Activated CD8-positive, alpha-beta T cell treated with anti-CD3 and anti-CD28 coated beads for 36 hours (primary cell): ENCODE measurements at regions of chr2 and their contacts with region 1.

Region 1: GRCh38 chr2:157336137-157337010 is 10.8 kb upstream of the ERMN start:
- DNase-seq: peak; percentile 69
- ATAC-seq: no peak
- H3K4me3 Mint-ChIP-seq: peak overlapping the region; percentile 42
- H3K27ac Mint-ChIP-seq: peak overlapping the region; percentile 14
- H3K4me1 Mint-ChIP-seq: peaks cover 63% of the 10 kb centered on the region
- H3K27me3 Mint-ChIP-seq: no peaks in the 10 kb centered on the region
- CTCF ChIP-seq: peak; percentile 91

Region 2: DNA sequence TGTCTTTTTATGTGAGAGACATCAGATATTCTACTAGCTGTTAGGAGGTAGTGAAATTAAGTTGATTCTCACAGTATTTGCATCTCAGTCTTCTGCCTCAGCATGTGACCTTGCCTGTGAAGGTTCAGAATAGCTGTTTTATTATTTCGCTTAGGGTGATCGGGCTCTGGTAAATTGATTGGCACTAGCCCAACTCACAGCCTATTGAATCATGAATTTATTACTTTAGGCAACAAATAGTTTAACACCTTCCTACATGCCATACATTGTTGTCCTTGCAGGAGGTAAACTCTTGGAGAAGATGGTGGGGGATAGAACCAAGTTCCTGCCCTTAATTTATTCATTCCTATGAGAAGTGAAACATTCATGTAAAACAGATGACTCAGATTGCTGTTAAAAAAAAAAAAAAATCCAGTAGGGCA is 798.3 kb before region 1 on chr2:
- CTCF ChIA-PET with region 1: no interaction called
- POLR2A ChIA-PET with region 1: no interaction called
- intact Hi-C with region 1: no loop called
- DNase-seq: no peak
- ATAC-seq: peak; percentile 73
- H3K4me3 Mint-ChIP-seq: no peak overlapping the region
- H3K27ac Mint-ChIP-seq: no peak overlapping the region
- H3K4me1 Mint-ChIP-seq: peaks cover 20% of the 10 kb centered on the region
- H3K27me3 Mint-ChIP-seq: no peaks in the 10 kb centered on the region
- CTCF ChIP-seq: no peak

Region 3: DNA sequence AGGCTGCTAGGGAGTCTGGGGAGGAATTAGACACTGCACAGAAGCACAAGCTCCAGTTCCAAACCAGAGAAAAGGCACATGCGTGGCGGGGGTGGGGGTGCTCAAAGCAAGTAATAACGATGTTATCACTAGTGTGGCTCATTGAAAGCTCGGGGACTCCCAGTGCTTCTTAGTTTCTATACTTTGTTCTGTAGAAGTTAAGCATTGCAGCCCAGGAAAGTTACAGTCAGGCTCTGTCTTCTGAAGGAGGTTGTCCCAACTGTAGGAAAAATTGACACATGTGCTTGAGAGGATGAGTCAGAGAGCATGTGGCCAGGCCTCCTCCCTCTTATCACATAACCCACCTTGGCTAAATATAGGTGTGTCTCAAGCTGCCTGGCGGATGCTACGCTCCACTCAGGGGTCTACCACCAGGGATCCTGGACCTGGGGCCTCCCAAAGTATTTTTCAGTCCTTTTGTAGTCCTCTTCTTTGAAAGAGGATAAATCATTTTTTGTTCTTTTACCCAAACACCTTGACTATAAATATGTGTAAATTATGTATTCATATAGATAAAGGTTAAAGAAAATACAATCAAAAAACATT is 75.1 kb before region 1 on chr2:
- CTCF ChIA-PET with region 1: no interaction called
- POLR2A ChIA-PET with region 1: no interaction called
- intact Hi-C with region 1: no loop called
- DNase-seq: peak; percentile 85
- ATAC-seq: peak; percentile 77
- H3K4me3 Mint-ChIP-seq: peak overlapping the region; percentile 39
- H3K27ac Mint-ChIP-seq: peak overlapping the region; percentile 78
- H3K4me1 Mint-ChIP-seq: peaks cover 32% of the 10 kb centered on the region
- H3K27me3 Mint-ChIP-seq: peaks cover 12% of the 10 kb centered on the region
- CTCF ChIP-seq: no peak

Region 4: DNA sequence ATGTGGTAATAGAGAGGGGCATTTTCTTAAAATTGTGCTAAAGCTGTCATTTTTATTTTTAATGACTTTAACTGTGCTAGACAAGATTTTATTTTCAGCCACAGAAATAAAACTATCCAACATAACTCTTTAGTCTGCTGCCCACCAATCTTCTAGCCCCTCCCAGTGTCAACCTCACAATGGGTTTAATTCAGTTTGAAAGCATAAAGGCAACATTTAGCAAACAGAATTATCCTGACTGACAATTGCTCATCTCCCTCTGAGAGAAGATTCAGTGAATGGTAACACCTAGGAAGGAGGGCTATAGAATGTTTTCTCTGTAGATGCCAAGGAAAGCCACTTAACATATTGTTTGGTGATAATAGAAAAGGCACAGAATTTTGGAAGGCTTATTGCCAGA is 16.0 kb before region 1 on chr2:
- CTCF ChIA-PET with region 1: interaction called, 131 read pairs
- POLR2A ChIA-PET with region 1: no interaction called
- intact Hi-C with region 1: no loop called
- DNase-seq: no peak
- ATAC-seq: no peak
- H3K4me3 Mint-ChIP-seq: no peak overlapping the region
- H3K27ac Mint-ChIP-seq: no peak overlapping the region
- H3K4me1 Mint-ChIP-seq: peaks cover 23% of the 10 kb centered on the region
- H3K27me3 Mint-ChIP-seq: no peaks in the 10 kb centered on the region
- CTCF ChIP-seq: no peak

Region 5: GRCh38 chr2:157355618-157356017 is 19.2 kb after region 1 on chr2:
- CTCF ChIA-PET with region 1: interaction called, 166 read pairs
- POLR2A ChIA-PET with region 1: interaction called, 5 read pairs
- intact Hi-C with region 1: no loop called
- DNase-seq: no peak
- ATAC-seq: no peak
- H3K4me3 Mint-ChIP-seq: no peak overlapping the region
- H3K27ac Mint-ChIP-seq: no peak overlapping the region
- H3K4me1 Mint-ChIP-seq: peaks cover 42% of the 10 kb centered on the region
- H3K27me3 Mint-ChIP-seq: no peaks in the 10 kb centered on the region
- CTCF ChIP-seq: no peak

Region 6: DNA sequence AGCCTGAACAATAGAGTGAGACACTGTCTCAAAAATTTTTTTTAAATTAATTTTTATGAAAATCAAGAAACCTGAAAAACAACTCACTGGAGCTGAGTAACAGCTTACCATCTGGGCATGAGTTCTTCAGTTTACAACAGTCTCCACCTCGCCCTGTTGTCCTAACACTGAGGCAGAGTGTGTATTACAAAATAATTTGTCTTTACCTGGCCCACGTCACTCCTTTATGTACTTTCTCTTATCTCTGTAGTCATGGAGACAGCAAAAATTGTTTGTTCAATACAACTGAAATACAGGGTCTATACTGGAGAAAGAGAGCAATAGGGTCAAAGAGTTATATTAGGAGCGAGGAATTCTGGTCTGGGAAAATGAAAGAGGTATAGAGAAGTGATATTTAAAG is 59.4 kb after region 1 on chr2:
- CTCF ChIA-PET with region 1: interaction called, 11 read pairs
- POLR2A ChIA-PET with region 1: no interaction called
- intact Hi-C with region 1: no loop called
- DNase-seq: no peak
- ATAC-seq: peak; percentile 13
- H3K4me3 Mint-ChIP-seq: no peak overlapping the region
- H3K27ac Mint-ChIP-seq: no peak overlapping the region
- H3K4me1 Mint-ChIP-seq: peaks cover 9% of the 10 kb centered on the region
- H3K27me3 Mint-ChIP-seq: no peaks in the 10 kb centered on the region
- CTCF ChIP-seq: no peak

Region 7: GRCh38 chr2:157413326-157414035 is 77.1 kb after region 1 on chr2:
- CTCF ChIA-PET with region 1: interaction called, 172 read pairs
- POLR2A ChIA-PET with region 1: interaction called, 52 read pairs
- intact Hi-C with region 1: no loop called
- DNase-seq: peak; percentile 71
- ATAC-seq: peak; percentile 65
- H3K4me3 Mint-ChIP-seq: peak overlapping the region; percentile 58
- H3K27ac Mint-ChIP-seq: peak overlapping the region; percentile 97
- H3K4me1 Mint-ChIP-seq: peaks cover 85% of the 10 kb centered on the region
- H3K27me3 Mint-ChIP-seq: no peaks in the 10 kb centered on the region
- CTCF ChIP-seq: no peak

Region 8: GRCh38 chr2:157443795-157444640 is 107.6 kb after region 1 on chr2 and contains the start of gene CYTIP:
- CTCF ChIA-PET with region 1: interaction called, 6 read pairs
- POLR2A ChIA-PET with region 1: interaction called, 11 read pairs
- intact Hi-C with region 1: no loop called
- DNase-seq: peak; percentile 82
- ATAC-seq: peak; percentile 43
- H3K4me3 Mint-ChIP-seq: peak within 1 kb of the TSS; percentile 90
- H3K27ac Mint-ChIP-seq: peak within 1 kb of the TSS; percentile 94
- H3K4me1 Mint-ChIP-seq: peaks cover 35% of the 10 kb centered on the region
- H3K27me3 Mint-ChIP-seq: no peaks in the 10 kb centered on the region
- CTCF ChIP-seq: no peak
- total RNA-seq, gene CYTIP: 514 to 520 TPM